Gastrocnemius medialis (tissue), 4 donors: ENCODE measurements at regions of chr19 and their contacts with region 1.

Region 1: GRCh38 chr19:53879140-53880081 is 2.6 kb upstream of the PRKCG start:
- DNase-seq: peak; percentile 72 to 76
- ATAC-seq: peak; percentile 74 to 80
- H3K4me3 ChIP-seq: peak overlapping the region; percentile 47 to 55 (median 52)
- H3K27ac ChIP-seq: peak overlapping the region in 1 of 4 donors; percentile 18
- H3K4me1 ChIP-seq: peaks cover 0 to 7% of the 10 kb centered on the region in 2 donors
- H3K27me3 ChIP-seq: peaks cover 39 to 50% (median 43%) of the 10 kb centered on the region in 3 donors
- CTCF ChIP-seq: no peak
- POLR2A ChIP-seq: no peak

Region 2: DNA sequence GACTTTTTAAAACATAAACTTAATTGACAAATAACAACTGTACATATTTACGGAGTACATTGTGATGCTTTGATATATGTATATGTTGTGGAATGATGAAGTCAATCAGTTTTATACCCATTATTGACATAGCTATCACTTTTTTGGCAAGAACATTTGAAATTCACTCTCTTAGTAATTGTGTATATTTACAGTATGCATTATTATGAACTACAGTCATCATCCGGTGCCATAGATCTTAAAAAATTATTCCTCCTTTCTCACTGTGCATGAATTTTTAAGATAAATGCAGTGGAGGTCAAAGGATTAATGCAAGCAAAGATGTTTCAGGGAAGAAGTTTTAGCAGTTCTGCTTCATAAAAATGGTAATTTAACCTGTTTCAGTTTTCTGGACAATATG is 603.9 kb before region 1 on chr19:
- in situ Hi-C with region 1: no loop called
- intact Hi-C with region 1: no loop called
- DNase-seq: no peak
- ATAC-seq: no peak
- H3K4me3 ChIP-seq: no peak overlapping the region
- H3K27ac ChIP-seq: no peak overlapping the region
- H3K4me1 ChIP-seq: no peaks in the 10 kb centered on the region
- H3K27me3 ChIP-seq: no peaks in the 10 kb centered on the region
- CTCF ChIP-seq: no peak
- POLR2A ChIP-seq: no peak

Region 3: GRCh38 chr19:53785101-53785889 is 94.1 kb before region 1 on chr19:
- in situ Hi-C with region 1: no loop called
- intact Hi-C with region 1: no loop called
- DNase-seq: no peak
- ATAC-seq: no peak
- H3K4me3 ChIP-seq: no peak overlapping the region
- H3K27ac ChIP-seq: no peak overlapping the region
- H3K4me1 ChIP-seq: no peaks in the 10 kb centered on the region
- H3K27me3 ChIP-seq: no peaks in the 10 kb centered on the region
- CTCF ChIP-seq: no peak
- POLR2A ChIP-seq: no peak

Region 4: GRCh38 chr19:53867225-53868090 is 12.0 kb before region 1 on chr19 and contains the start of gene MYADM:
- in situ Hi-C with region 1: no loop called
- intact Hi-C with region 1: loop called (anchors 1 kb)
- DNase-seq: peak; percentile 87 to 93
- ATAC-seq: peak; percentile 68 to 79
- H3K4me3 ChIP-seq: peak within 1 kb of the TSS; percentile 64 to 70 (median 67)
- H3K27ac ChIP-seq: peak within 1 kb of the TSS; percentile 83 to 92 (median 86)
- H3K4me1 ChIP-seq: peaks cover 4 to 16% of the 10 kb centered on the region in 2 donors
- H3K27me3 ChIP-seq: peaks cover 6 to 34% (median 23%) of the 10 kb centered on the region in 3 donors
- CTCF ChIP-seq: no peak
- POLR2A ChIP-seq: peak; percentile 49 to 65
- total RNA-seq, gene MYADM: 4.5 to 12.6 (median 8.8) TPM